HepG2 (cell line): ENCODE measurements at regions of chr2 and their contacts with region 1.

Region 1: GRCh38 chr2:118088051-118089024 is at the start of gene INSIG2:
- DNase-seq: peak; percentile 99
- ATAC-seq: peak; percentile 88
- H3K4me3 ChIP-seq: peak within 1 kb of the TSS; percentile 79 to 91 (median 89)
- H3K27ac ChIP-seq: peak within 1 kb of the TSS; percentile 91
- H3K4me1 ChIP-seq: peaks cover 61% of the 10 kb centered on the region
- H3K27me3 ChIP-seq: no peaks in the 10 kb centered on the region; a peak in 1 of 5 replicates
- CTCF ChIP-seq: no peak
- EP300 ChIP-seq: peak in 1 of 2 experiments; percentile 71; a peak in 2 of 4 replicates
- POLR2A ChIP-seq: peak; percentile 83 to 94
- RAD21 ChIP-seq: no peak
- total RNA-seq, gene INSIG2: 54.6 and 73.5 TPM in 2 replicates

Region 2: DNA sequence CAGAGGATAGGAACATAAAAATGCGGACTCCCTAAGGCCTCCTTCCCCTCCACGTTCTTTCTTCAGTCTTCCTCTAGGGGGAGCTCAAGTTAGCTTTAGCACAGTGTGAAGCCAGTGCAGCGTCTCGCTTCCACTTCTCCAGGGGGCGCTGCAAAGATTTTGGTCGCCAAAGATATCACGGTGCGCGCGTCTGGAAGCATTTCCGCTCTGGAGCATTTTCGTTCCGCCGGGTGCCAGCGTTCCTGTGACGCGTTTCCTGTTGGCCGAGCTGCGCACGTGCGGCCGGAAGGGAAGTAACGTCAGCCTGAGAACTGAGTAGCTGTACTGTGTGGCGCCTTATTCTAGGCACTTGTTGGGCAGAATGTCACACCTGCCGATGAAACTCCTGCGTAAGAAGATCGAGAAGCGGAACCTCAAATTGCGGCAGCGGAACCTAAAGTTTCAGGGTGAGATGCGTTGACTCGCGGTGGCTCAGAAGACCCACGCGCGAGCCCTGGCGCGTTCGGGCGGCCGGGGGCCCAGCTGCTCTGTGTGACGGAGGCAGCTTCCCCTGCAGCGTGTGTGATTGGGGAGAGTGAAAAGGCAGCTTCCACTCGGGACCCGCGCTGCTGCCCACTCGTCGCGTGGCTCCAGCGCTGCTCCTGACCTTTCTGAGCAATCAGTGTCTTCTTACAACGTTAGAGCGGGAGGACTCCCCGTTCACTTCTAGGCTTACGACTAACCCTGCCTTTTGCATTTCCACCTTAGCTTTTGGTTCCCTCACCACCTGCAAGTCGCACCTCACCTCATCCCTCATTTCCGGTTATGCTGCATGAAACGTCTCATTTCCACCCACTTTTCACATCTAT is 273.7 kb before region 1 on chr2 and contains the start of gene DDX18:
- CTCF ChIA-PET with region 1: no interaction called
- POLR2A ChIA-PET with region 1: interaction called, 4 read pairs
- in situ Hi-C with region 1: no loop called
- intact Hi-C with region 1: loop called (anchors 2 kb)
- DNase-seq: peak; percentile 99
- ATAC-seq: peak; percentile 98
- H3K4me3 ChIP-seq: peak within 1 kb of the TSS; percentile 85 to 96 (median 90)
- H3K27ac ChIP-seq: peak within 1 kb of the TSS; percentile 80
- H3K4me1 ChIP-seq: peaks cover 31% of the 10 kb centered on the region
- H3K27me3 ChIP-seq: no peaks in the 10 kb centered on the region; a peak in 1 of 5 replicates
- CTCF ChIP-seq: peak; percentile 100
- EP300 ChIP-seq: peak; percentile 9 to 60; a peak in 2 of 4 replicates
- POLR2A ChIP-seq: peak; percentile 91 to 95
- RAD21 ChIP-seq: peak; percentile 89
- total RNA-seq, gene DDX18: 134 and 234 TPM in 2 replicates

Region 3: DNA sequence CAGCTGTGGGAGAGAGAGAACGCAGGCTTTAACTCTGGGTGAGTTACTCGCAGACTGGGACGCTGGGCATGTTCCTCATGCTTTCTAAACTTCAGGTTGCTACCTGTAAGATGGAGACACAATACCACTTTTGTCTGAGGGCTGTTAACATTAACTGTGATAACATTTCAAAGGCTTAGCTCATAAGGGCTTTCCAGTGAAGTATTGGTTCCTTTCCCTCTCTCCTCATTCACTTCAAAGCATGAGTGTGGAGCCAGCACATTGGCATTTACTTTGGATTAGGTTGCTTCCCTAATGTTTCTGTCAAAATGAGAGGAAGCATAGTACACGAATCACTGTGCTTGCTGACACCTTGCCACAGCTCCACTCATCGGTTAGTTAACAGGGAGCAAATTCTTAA is 30.1 kb after region 1 on chr2:
- CTCF ChIA-PET with region 1: no interaction called
- POLR2A ChIA-PET with region 1: interaction called, 3 read pairs
- in situ Hi-C with region 1: no loop called
- intact Hi-C with region 1: loop called (anchors 1 kb)
- DNase-seq: peak; percentile 72
- ATAC-seq: peak; percentile 23
- H3K4me3 ChIP-seq: no peak overlapping the region
- H3K27ac ChIP-seq: no peak overlapping the region
- H3K4me1 ChIP-seq: peaks cover 47% of the 10 kb centered on the region
- H3K27me3 ChIP-seq: no peaks in the 10 kb centered on the region
- CTCF ChIP-seq: no peak
- EP300 ChIP-seq: peak in 1 of 2 experiments; percentile 51; a peak in 2 of 4 replicates
- POLR2A ChIP-seq: no peak
- RAD21 ChIP-seq: no peak